ENCODE measurements at regions of chr7 and their contacts with region 1.

Region 1: DNA sequence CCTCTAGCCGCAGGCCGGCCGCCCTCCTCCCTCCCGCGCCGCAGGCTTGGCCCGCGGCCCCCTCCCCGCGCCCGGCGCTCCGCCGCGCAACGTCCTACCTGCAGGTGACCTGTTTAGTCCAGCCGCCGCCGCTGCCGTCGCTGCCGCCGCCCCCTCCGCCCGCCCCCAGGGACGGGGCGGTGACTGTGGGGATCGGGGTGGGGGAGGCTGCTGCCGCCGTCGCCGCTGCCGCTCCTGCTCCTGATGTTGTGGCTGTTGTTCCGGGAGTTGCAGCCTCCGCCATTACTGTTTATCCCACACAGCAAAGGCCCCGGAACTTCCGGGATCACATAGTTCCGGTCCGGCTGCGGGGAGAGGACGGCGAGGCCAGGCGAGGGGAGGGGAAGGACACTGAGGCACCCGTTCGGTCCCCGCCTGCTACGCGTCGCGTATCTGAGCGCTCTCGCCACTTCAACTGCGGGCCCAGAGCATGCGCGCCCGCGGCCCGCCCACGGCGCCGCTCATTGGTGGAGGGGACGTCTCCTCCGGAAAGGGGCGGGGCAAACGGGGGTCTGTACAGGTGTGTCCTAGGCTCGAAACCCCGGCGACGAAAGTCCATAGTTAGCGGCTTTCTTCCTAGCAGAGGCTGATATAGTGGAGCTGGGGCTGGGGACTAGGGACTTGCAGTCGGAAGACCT is at the start of gene MKRN1:
- DNase-seq: peak; percentile 92
- ATAC-seq: peak; percentile 92 to 97
- H3K4me3 ChIP-seq: peak within 1 kb of the TSS; percentile 85 to 98 (median 91)
- H3K27ac ChIP-seq: peak within 1 kb of the TSS; percentile 73 to 96 (median 84)
- H3K4me1 ChIP-seq: peaks cover 13 to 18% of the 10 kb centered on the region in 2 donors
- H3K27me3 ChIP-seq: no peaks in the 10 kb centered on the region
- CTCF ChIP-seq: peak in 1 of 5 experiments; percentile 24
- POLR2A ChIP-seq: peak; percentile 53 to 77
- total RNA-seq, gene MKRN1: 38.0 to 90.4 (median 64.7) TPM

Region 2: DNA sequence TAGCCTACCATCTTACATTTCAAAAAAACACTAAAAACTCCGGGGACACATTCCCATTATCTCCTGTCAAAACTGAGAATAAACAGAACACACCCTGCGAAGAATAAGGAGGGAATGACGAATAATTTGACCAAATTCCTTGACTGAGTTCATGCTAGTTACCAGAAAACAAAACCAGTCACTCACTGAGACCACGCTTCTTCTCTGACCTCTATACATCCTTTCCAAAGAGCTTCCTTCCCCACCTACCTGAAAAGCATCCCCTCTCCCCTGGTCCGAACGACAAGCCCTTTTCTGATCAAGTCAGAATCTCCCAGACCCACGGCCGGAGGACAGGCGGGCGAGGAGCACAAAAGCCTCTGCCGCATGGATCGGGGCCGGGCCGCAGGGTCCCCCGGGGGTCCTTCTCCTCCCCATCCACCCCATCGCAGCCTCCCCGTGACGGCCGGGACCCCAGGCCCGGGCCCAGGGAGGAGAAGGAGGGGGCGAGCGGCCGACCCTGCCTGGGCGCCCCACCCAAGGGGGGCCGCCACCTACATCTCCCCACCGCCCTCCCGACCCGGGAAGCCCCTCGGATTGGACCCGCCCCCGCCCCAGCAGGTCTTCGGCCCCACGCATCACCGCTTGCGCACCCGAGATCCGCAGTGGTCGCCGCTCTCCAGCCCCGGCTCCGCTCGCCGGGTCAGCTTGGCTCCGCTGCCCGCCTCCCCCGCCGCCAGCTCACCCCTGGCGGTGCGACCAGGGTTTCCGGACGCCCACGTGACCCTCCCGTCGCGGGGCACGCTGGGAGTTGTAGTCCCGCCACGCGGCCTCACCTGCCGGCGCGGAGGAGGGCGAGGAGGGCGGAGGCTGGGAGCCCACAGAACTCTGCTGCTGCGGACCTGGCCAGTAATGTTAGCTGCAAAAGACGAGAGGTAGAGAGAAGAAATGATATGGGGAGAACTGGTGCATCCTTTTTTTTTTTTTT is 81.1 kb before region 1 on chr7 and contains the start of gene SLC37A3:
- in situ Hi-C with region 1: no loop called
- intact Hi-C with region 1: loop called (anchors 1 kb)
- DNase-seq: peak; percentile 76
- ATAC-seq: peak; percentile 92 to 97
- H3K4me3 ChIP-seq: peak within 1 kb of the TSS; percentile 78 to 96 (median 94)
- H3K27ac ChIP-seq: peak within 1 kb of the TSS; percentile 82 to 88 (median 86)
- H3K4me1 ChIP-seq: no peaks in the 10 kb centered on the region
- H3K27me3 ChIP-seq: no peaks in the 10 kb centered on the region
- CTCF ChIP-seq: peak in 4 of 5 experiments; percentile 15 to 42 (median 23)
- POLR2A ChIP-seq: peak; percentile 61 to 77
- total RNA-seq, gene SLC37A3: 13.4 to 36.8 (median 18.0) TPM

Region 3: GRCh38 chr7:140506788-140507464 is 27.7 kb after region 1 on chr7:
- in situ Hi-C with region 1: no loop called
- intact Hi-C with region 1: loop called (anchors 1 kb)
- DNase-seq: peak; percentile 50 to 86
- ATAC-seq: peak; percentile 97 to 99
- H3K4me3 ChIP-seq: no peak overlapping the region
- H3K27ac ChIP-seq: peak overlapping the region; percentile 62 to 85 (median 76)
- H3K4me1 ChIP-seq: peaks cover 11% of the 10 kb centered on the region in 2 donors
- H3K27me3 ChIP-seq: no peaks in the 10 kb centered on the region
- CTCF ChIP-seq: peak in 1 of 5 experiments; percentile 13
- POLR2A ChIP-seq: no peak

Region 4: DNA sequence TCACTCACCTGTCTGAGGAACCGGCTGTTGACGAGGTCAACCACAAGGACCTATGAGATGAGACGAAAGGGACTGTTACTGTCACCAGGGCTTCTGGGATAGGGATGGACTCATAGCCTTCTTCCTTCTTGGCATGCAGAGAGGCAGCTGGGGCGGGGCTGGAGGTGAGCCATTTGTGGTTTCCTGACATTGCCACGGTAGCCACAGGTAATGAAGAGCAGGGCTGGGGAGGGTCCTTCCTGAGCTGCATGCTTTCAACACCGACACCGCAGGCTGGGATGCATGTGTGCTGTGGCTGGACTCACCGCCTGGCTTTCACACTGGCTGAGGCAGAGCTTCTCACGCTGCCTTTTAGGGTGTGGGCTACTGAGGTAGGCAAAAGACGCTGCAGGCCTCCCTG is 46.5 kb after region 1 on chr7:
- in situ Hi-C with region 1: no loop called
- intact Hi-C with region 1: no loop called
- DNase-seq: no peak
- ATAC-seq: no peak
- H3K4me3 ChIP-seq: no peak overlapping the region
- H3K27ac ChIP-seq: no peak overlapping the region
- H3K4me1 ChIP-seq: no peaks in the 10 kb centered on the region
- H3K27me3 ChIP-seq: no peaks in the 10 kb centered on the region
- CTCF ChIP-seq: no peak
- POLR2A ChIP-seq: no peak

Region 5: DNA sequence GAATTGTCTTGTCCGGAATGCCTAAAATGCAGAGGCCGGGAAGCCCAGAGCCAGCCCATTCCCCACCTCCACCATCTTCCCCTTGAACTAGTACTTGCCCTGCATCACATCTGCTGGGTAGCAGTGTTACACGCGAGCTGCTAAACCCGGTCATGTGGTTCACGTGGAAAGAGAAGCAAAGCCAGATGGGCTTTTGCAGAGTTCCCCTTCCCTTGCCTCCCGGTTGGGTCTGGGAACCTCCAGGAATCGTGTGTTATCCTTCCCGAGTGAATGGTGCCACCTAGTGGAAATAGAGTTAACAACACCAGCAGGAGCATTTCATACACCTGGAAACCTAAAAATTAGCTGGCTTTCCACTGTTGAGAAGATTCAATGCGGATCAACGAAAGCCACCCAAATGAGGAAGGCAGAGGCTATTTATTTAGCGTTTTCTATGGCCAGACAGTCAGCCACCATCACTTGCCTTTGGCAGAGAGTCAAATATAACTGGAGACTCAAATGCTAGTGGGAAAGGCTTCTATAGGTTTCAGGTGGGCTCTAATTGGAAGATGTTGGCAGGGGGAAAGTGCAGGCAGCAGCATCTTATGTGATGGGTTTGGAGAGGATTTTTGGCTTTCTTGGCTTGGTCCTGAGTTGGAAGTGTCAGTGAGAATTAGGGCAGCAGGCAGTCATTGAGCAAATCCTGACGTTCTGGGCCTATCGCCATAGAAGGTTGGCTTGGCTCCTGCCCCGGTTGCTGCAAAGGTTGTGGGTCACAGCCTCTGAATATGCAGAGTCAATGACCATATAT is 174.3 kb after region 1 on chr7:
- in situ Hi-C with region 1: no loop called
- intact Hi-C with region 1: loop called (anchors 1 kb)
- DNase-seq: peak; percentile 46 to 48
- ATAC-seq: peak; percentile 71 to 75
- H3K4me3 ChIP-seq: no peak overlapping the region
- H3K27ac ChIP-seq: peak overlapping the region in 2 of 4 donors; percentile 27 to 35
- H3K4me1 ChIP-seq: peaks cover 23% of the 10 kb centered on the region in 2 donors
- H3K27me3 ChIP-seq: no peaks in the 10 kb centered on the region
- CTCF ChIP-seq: peak; percentile 81 to 94 (median 88)
- POLR2A ChIP-seq: no peak

Region 6: DNA sequence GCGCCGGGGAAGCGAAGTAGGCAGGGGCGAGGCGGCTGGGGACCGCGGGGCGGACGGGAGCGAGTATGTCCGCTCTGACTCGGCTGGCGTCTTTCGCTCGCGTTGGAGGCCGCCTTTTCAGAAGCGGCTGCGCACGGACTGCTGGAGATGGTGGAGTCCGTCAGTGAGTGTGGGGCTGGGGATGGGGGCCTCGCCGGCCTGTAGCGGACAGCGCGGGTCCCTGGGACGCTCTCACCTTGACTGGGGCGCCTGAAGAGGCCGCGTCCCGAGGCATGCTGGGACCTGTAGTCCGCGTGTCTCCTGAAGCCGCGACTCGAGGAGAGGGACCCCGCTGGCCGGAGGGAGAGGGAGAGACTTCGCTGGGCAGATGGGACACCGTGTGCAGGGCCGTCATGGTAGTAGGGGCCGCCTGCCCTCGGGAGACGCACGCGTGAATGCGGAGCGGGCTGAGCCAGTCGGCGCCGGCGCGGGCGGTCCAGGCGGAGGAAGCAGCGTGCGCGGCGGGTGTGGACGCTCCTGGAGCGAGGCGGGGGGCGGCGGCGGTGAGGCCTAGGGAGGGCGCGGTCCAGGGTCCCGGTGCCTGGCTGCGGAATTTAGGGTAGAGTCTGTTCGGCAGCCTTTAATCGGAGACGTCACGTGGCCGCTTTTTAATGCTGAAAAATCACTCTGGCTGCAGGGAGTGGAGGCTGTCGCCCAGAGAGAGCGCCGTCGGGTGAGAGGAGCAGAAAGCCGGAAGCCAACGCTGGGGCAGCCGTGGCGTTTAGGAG is 217.7 kb after region 1 on chr7 and contains the start of gene NDUFB2:
- in situ Hi-C with region 1: no loop called
- intact Hi-C with region 1: loop called (anchors 1 kb)
- DNase-seq: peak; percentile 64 to 73
- ATAC-seq: peak; percentile 94 to 95
- H3K4me3 ChIP-seq: peak within 1 kb of the TSS; percentile 71 to 95 (median 88)
- H3K27ac ChIP-seq: peak within 1 kb of the TSS; percentile 84 to 98 (median 88)
- H3K4me1 ChIP-seq: peaks cover 14 to 16% of the 10 kb centered on the region in 2 donors
- H3K27me3 ChIP-seq: no peaks in the 10 kb centered on the region
- CTCF ChIP-seq: no peak
- POLR2A ChIP-seq: peak; percentile 92 to 94
- total RNA-seq, gene NDUFB2: 449 to 793 (median 538) TPM